ENCODE measurements at regions of chr13 and their contacts with region 1.

Region 1: DNA sequence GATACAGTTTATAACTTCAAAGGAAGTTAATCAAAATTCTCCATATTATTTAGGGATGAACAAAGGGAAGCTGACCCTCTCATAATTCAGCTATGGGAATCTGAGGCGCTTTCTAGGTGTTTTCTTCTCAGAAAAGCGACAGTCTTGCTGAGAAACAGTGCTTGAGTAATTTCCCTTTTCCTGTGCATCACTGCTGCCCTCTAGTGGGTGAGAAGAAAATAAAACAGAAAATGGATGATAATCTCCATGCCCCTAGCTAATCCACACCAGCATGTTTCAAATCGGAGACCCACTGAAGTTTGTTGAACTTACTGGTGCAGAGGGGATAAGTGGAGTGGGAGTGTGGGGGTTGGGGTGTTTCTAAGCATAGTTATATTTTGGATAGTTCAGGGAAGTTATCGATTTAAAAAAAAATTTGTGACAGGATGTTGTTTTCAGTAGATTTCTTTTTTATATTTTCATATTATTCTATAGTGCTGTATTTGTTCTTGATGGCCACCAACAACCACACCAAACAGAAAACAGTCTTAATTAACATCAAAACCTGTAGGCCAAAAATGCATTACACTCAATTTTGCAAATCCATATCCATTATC is 21.4 kb downstream of the LCP1 start:
- DNase-seq: peak; percentile 62 to 79 (median 73)
- H3K4me3 ChIP-seq: peak overlapping the region in 1 of 3 experiments; percentile 26
- H3K4me3 Mint-ChIP-seq: peak overlapping the region in 1 of 2 donors; percentile 54
- H3K27ac ChIP-seq: peak overlapping the region in 1 of 2 donors; percentile 69
- H3K27ac Mint-ChIP-seq: peak overlapping the region; percentile 78 to 91 (median 89)
- H3K4me1 ChIP-seq: peaks cover 47 to 50% of the 10 kb centered on the region in 2 donors
- H3K4me1 Mint-ChIP-seq: peaks cover 45% of the 10 kb centered on the region
- H3K27me3 ChIP-seq: no peaks in the 10 kb centered on the region
- H3K27me3 Mint-ChIP-seq: no peaks in the 10 kb centered on the region
- CTCF ChIP-seq: peak; percentile 86

Region 2: DNA sequence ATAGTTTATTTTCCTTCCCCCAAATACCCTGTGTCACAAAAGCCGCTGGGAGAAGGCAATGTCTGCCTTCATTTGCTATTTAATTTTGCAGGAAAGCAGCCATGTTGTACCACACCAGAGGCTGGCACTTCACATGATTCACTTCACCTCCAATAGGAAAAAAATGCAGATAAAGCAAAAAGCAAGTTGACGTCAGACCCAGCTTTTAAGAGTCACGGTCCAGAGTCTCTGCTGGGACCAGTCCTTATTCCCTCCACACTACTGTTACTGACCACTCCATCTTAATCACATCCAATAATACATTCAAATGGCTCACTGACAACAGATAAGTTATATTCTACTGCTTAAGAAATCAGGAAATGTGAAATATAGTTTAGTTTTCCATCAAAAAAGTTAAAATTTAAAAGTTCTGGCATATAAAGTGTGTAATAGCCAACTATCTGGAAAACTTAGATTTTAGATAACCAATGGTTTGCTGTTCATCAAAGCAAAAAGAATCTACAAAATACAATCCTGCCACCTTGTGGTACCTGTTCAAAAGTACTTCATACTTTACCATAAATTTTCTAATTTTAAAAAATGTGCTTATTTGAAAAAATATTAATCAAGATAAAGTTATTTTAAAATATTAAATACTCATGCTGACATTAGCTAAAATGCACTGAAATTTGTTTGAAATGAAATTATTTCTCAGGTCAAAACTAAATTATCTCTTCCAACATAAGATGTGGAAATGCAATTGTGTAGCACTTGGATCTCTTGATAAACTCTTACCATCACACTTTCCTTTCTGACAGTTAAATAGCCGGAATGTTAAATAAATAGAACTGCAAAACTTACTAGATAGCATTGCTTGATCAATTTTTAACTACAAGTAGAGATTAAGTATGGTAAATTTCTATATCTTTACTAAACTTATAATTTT is 1689.7 kb before region 1 on chr13:
- intact Hi-C with region 1: no loop called
- DNase-seq: peak in 1 of 3 donors; percentile 24
- H3K4me3 ChIP-seq: no peak overlapping the region
- H3K4me3 Mint-ChIP-seq: no peak overlapping the region
- H3K27ac ChIP-seq: no peak overlapping the region
- H3K27ac Mint-ChIP-seq: no peak overlapping the region
- H3K4me1 ChIP-seq: no peaks in the 10 kb centered on the region
- H3K4me1 Mint-ChIP-seq: no peaks in the 10 kb centered on the region
- H3K27me3 ChIP-seq: no peaks in the 10 kb centered on the region
- H3K27me3 Mint-ChIP-seq: peaks cover 0 to 2% (median 0%) of the 10 kb centered on the region in 3 donors
- CTCF ChIP-seq: peak; percentile 63

Region 3: GRCh38 chr13:46184277-46184699 is 23.7 kb after region 1 on chr13:
- intact Hi-C with region 1: loop called in 1 of 2 experiments (anchors 2 kb)
- DNase-seq: peak; percentile 61 to 73 (median 68)
- H3K4me3 ChIP-seq: peak overlapping the region; percentile 20 to 98 (median 39)
- H3K4me3 Mint-ChIP-seq: peak overlapping the region; percentile 51 to 67
- H3K27ac ChIP-seq: peak overlapping the region; percentile 53 to 95
- H3K27ac Mint-ChIP-seq: peak overlapping the region; percentile 46 to 98 (median 83)
- H3K4me1 ChIP-seq: peaks cover 33 to 38% of the 10 kb centered on the region in 2 donors
- H3K4me1 Mint-ChIP-seq: peaks cover 47% of the 10 kb centered on the region
- H3K27me3 ChIP-seq: no peaks in the 10 kb centered on the region
- H3K27me3 Mint-ChIP-seq: peaks cover 0 to 5% (median 0%) of the 10 kb centered on the region in 3 donors
- CTCF ChIP-seq: peak; percentile 79

Region 4: GRCh38 chr13:46211483-46212351 is 51.1 kb after region 1 on chr13 and contains the start of gene LRRC63:
- intact Hi-C with region 1: loop called (anchors 5 to 10 kb)
- DNase-seq: peak; percentile 68 to 72 (median 72)
- H3K4me3 ChIP-seq: peak within 1 kb of the TSS; percentile 52 to 98 (median 77)
- H3K4me3 Mint-ChIP-seq: peak within 1 kb of the TSS; percentile 87 to 98
- H3K27ac ChIP-seq: peak within 1 kb of the TSS; percentile 27 to 56
- H3K27ac Mint-ChIP-seq: peak within 1 kb of the TSS; percentile 75 to 90 (median 88)
- H3K4me1 ChIP-seq: peaks cover 8 to 17% of the 10 kb centered on the region in 2 donors
- H3K4me1 Mint-ChIP-seq: peaks cover 23% of the 10 kb centered on the region
- H3K27me3 ChIP-seq: no peaks in the 10 kb centered on the region
- H3K27me3 Mint-ChIP-seq: no peaks in the 10 kb centered on the region
- CTCF ChIP-seq: no peak
- polyA plus RNA-seq, gene LRRC63: 0.36 TPM in 1 of 3 donors, not detected in the others

Measured in CD14-positive monocyte (primary cell).